ENCODE measurements at regions of chr1 and their contacts with region 1.

Region 1: GRCh38 chr1:6794164-6794563 is 8.9 kb downstream of the CAMTA1 start:
- DNase-seq: no peak
- H3K4me3 ChIP-seq: no peak overlapping the region
- H3K4me3 Mint-ChIP-seq: no peak overlapping the region
- H3K27ac ChIP-seq: no peak overlapping the region
- H3K27ac Mint-ChIP-seq: no peak overlapping the region
- H3K4me1 ChIP-seq: no peaks in the 10 kb centered on the region
- H3K4me1 Mint-ChIP-seq: peaks cover 12% of the 10 kb centered on the region
- H3K27me3 ChIP-seq: no peaks in the 10 kb centered on the region
- H3K27me3 Mint-ChIP-seq: no peaks in the 10 kb centered on the region
- CTCF ChIP-seq: peak; percentile 35

Region 2: DNA sequence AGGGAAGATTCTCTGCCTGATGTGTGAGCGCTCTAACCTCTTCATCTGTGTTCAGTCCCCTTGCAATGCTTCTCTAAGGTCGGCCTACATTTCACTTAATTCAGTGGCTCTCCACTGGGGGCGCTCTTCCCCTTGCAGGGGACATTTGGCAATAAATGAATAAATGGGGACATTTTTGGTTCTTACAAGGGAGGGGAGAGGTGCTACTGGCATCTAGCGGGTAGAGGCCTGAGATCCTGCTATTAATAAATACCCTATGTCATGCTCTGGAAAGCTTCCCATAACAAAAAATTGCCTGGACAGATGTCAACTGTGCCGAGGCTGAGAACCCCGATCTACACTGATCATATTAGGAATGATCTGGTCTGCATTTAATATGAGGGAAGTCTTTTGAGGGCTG is 66.6 kb before region 1 on chr1:
- intact Hi-C with region 1: no loop called
- DNase-seq: peak; percentile 62 to 70 (median 70)
- H3K4me3 ChIP-seq: no peak overlapping the region
- H3K4me3 Mint-ChIP-seq: no peak overlapping the region
- H3K27ac ChIP-seq: no peak overlapping the region
- H3K27ac Mint-ChIP-seq: peak overlapping the region in 1 of 7 donors; percentile 37
- H3K4me1 ChIP-seq: no peaks in the 10 kb centered on the region
- H3K4me1 Mint-ChIP-seq: peaks cover 4% of the 10 kb centered on the region
- H3K27me3 ChIP-seq: no peaks in the 10 kb centered on the region
- H3K27me3 Mint-ChIP-seq: peaks cover 4 to 10% (median 4%) of the 10 kb centered on the region in 3 donors
- CTCF ChIP-seq: peak; percentile 93

Region 3: GRCh38 chr1:6889875-6890480 is 95.8 kb after region 1 on chr1:
- intact Hi-C with region 1: loop called (anchors 10 kb)
- DNase-seq: peak; percentile 16 to 39 (median 35)
- H3K4me3 ChIP-seq: no peak overlapping the region
- H3K4me3 Mint-ChIP-seq: no peak overlapping the region
- H3K27ac ChIP-seq: no peak overlapping the region
- H3K27ac Mint-ChIP-seq: no peak overlapping the region
- H3K4me1 ChIP-seq: no peaks in the 10 kb centered on the region
- H3K4me1 Mint-ChIP-seq: no peaks in the 10 kb centered on the region
- H3K27me3 ChIP-seq: no peaks in the 10 kb centered on the region
- H3K27me3 Mint-ChIP-seq: no peaks in the 10 kb centered on the region
- CTCF ChIP-seq: peak; percentile 84

Region 4: DNA sequence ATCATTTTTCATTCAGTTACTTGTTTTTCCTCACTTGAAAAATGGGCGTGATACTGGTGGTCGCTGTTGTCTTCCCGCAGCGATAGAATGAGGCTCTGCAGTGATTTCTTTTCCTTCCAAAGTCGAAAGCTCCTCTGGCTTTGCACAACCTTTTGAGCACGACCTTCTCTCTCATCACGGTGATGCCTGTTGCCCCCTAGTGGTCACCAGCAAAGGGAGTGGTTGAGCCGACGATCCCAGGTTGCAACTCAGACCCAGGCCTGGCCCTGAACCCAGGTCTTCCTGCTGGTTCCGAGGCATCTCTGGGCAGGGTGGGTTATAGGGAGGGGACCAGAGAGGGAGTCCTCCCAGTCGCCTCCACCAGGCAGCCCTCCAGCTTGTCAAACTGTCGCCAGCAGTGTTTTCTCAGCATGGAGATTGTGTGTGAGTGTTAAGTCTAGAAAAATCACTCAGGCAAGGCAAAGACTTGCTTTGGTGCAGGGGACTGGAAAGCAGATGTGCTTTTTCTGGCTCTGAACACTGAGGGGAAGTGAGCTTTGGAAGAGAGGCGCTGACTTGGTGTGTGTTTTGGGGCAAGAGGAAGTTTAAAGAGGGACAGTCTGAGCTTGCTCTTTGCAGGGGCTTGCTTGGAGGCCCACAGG is 276.3 kb after region 1 on chr1:
- intact Hi-C with region 1: loop called in 1 of 2 experiments (anchors 10 kb)
- DNase-seq: peak; percentile 12 to 37 (median 32)
- H3K4me3 ChIP-seq: no peak overlapping the region
- H3K4me3 Mint-ChIP-seq: peak overlapping the region in 1 of 2 donors; percentile 52
- H3K27ac ChIP-seq: no peak overlapping the region
- H3K27ac Mint-ChIP-seq: no peak overlapping the region
- H3K4me1 ChIP-seq: no peaks in the 10 kb centered on the region
- H3K4me1 Mint-ChIP-seq: peaks cover 3% of the 10 kb centered on the region
- H3K27me3 ChIP-seq: peaks cover 0 to 9% of the 10 kb centered on the region in 2 donors
- H3K27me3 Mint-ChIP-seq: peaks cover 10 to 18% (median 13%) of the 10 kb centered on the region in 3 donors
- CTCF ChIP-seq: peak; percentile 76